Activated CD8-positive, alpha-beta memory T cell treated with anti-CD3 and anti-CD28 coated beads, Interleukin-2, amount 10 ng/mL, durations not matched to agents 7 days and 5 days (primary cell): ENCODE measurements at regions of chr2 and their contacts with region 1.

Region 1: DNA sequence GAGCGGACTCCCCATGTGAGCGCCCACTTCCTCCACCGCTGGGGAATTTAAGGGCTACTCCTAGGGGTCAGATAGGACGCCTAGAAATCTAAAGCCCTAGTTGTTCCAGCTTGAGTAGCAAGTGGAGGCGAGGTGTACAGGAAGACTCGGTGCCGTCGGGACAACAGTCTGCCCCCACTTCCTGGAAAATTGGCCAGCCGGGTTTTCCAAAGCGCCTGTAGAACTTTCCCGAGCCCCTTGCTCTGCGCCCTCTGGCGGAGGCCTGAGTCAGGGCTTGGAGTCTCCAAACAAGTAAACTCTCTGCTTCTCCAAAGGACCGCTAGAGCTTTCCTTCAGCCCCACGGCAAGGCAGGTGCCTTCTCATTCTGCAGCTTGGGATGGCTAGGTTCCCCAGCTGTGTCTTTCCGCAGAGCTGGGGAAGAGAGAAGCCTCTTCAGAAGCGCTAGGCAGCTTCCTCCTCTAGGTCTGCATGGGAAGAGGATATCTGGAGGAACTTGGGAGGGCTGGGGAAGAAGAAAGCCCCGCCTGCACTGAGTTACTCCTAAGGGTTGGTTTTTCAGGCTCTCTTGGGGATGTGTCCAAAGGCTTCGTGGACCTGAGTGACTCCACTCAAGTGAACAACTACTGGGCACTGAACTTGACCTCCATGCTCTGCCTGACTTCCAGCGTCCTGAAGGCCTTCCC is 688 bp downstream of the SPR start:
- DNase-seq: peak; percentile 69
- ATAC-seq: peak; percentile 52
- H3K4me3 Mint-ChIP-seq: peak overlapping the region; percentile 50
- H3K27ac Mint-ChIP-seq: no peak overlapping the region
- H3K4me1 Mint-ChIP-seq: peaks cover 6% of the 10 kb centered on the region
- H3K27me3 Mint-ChIP-seq: peaks cover 47% of the 10 kb centered on the region

Region 2: GRCh38 chr2:72862239-72862988 is 25.5 kb before region 1 on chr2:
- CTCF ChIA-PET with region 1: interaction called, 15 read pairs
- DNase-seq: peak; percentile 90
- ATAC-seq: peak; percentile 98
- H3K4me3 Mint-ChIP-seq: peak overlapping the region; percentile 64
- H3K27ac Mint-ChIP-seq: no peak overlapping the region
- H3K4me1 Mint-ChIP-seq: peaks cover 21% of the 10 kb centered on the region
- H3K27me3 Mint-ChIP-seq: peaks cover 64% of the 10 kb centered on the region

Region 3: DNA sequence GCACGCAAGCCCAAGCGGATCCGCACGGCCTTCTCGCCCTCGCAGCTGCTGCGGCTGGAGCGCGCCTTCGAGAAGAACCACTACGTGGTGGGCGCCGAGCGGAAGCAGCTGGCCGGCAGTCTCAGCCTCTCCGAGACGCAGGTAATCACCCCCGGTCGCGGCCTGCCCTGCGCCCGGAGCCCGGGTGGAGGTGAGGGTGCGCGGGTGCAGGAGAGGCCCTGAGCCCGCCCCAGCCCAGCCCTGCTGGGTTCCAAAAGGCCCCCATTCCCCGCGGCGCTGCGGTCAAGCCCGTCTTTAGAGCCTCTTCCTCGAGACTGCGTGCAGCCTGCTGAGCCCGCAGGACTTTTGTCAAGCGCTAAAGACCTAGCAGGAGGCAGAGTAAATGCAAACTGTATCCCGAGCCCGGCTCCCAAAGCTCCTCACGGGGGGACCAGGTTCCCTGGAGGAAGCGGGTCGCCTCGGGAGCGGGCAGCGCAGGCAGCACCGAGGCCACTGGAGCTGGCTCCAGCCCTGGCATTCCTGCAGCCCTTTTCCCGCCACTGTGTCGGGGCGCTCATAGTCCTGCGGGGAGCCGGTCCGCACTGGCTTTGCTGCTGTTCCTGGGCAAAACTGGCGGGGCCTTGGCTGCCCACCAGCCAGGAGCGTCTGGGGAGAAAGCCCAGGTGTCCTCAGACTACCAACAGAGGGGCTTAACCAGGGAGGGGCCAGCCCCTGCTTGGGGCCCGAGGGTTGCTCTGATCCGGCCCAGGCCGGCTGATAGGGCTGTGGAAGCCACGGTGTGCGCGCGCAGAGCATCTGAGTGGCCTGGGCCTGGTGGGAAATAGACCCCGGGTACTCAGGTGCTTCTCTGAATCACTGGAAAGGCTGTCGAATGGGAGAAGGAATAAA is 36.7 kb after region 1 on chr2:
- CTCF ChIA-PET with region 1: interaction called, 26 read pairs
- DNase-seq: peak; percentile 57
- ATAC-seq: peak; percentile 42
- H3K4me3 Mint-ChIP-seq: no peak overlapping the region
- H3K27ac Mint-ChIP-seq: no peak overlapping the region
- H3K4me1 Mint-ChIP-seq: peaks cover 14% of the 10 kb centered on the region
- H3K27me3 Mint-ChIP-seq: peaks cover 62% of the 10 kb centered on the region

Region 4: DNA sequence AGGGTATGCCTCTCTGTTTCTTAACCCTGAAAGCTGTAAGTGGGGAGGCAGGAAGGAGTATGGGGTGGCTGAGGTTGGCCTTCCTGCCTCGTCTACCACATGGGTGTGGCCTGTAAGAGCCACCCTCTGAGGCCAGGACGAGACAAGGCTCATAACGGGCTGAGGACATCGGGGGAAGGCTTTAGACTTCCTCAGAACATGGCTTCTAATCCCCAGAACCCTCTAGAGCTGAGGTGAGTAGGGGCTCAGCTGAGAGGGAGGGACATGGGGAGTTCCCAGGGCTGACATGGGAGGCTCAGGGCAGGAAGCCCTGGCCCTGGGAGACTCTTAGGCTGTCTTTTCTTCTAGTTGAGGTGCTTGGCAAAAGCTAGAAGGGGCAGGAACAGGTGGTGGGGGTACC is 66.1 kb after region 1 on chr2:
- CTCF ChIA-PET with region 1: interaction called, 50 read pairs
- DNase-seq: peak; percentile 87
- ATAC-seq: peak; percentile 98
- H3K4me3 Mint-ChIP-seq: peak overlapping the region; percentile 86
- H3K27ac Mint-ChIP-seq: peak overlapping the region; percentile 90
- H3K4me1 Mint-ChIP-seq: peaks cover 28% of the 10 kb centered on the region
- H3K27me3 Mint-ChIP-seq: no peaks in the 10 kb centered on the region

Region 5: DNA sequence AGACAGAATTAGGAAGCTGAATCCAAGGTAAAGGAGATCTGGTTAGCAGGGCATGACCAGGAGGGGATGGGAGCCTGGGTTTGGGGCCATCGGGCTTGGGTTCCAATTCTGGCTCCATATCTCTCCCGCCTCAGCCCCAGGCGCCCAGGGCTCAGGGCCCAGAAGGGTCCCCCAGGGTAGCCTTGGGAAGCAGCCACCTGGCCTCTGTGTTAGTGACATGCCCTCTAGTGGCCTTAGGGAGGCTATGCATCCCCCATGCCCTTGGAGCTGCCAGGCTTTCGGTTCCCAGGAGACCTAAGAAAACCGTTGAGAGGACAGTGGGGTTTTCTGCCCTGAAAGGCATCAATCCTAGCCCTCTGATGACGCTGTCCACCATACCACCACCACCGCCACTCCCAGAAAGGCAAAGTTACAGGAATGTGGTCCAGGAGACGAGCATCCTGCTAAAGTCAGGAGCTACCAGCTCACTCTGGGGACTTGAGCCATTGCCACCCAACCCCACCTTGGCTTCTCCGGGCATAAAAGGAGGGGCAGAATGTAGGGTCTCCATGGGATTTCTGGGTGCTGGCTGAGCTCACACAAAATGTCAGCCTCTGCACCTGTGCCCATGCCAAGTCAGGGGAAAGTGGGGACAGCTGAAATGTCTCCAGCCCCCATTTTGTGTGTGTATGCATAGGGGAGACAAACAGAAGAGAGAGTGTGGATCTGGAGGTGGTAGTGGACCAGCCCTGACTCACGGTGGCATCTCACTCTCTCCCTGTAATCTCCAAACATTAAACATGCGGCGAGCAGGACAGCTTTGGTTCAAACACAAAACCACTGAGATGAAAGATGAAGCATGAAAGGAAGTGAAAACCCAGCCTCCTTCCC is 85.9 kb after region 1 on chr2:
- CTCF ChIA-PET with region 1: interaction called, 306 read pairs
- DNase-seq: peak; percentile 64
- ATAC-seq: peak; percentile 92
- H3K4me3 Mint-ChIP-seq: no peak overlapping the region
- H3K27ac Mint-ChIP-seq: no peak overlapping the region
- H3K4me1 Mint-ChIP-seq: no peaks in the 10 kb centered on the region
- H3K27me3 Mint-ChIP-seq: peaks cover 7% of the 10 kb centered on the region

Region 6: GRCh38 chr2:73212448-73213176 is 324.7 kb after region 1 on chr2:
- CTCF ChIA-PET with region 1: interaction called, 10 read pairs
- DNase-seq: peak; percentile 83
- ATAC-seq: peak; percentile 76
- H3K4me3 Mint-ChIP-seq: peak overlapping the region; percentile 89
- H3K27ac Mint-ChIP-seq: no peak overlapping the region
- H3K4me1 Mint-ChIP-seq: peaks cover 30% of the 10 kb centered on the region
- H3K27me3 Mint-ChIP-seq: peaks cover 2% of the 10 kb centered on the region